Sigmoid colon (tissue), 7 donors: ENCODE measurements at regions of chr16 and their contacts with region 1.

Region 1: DNA sequence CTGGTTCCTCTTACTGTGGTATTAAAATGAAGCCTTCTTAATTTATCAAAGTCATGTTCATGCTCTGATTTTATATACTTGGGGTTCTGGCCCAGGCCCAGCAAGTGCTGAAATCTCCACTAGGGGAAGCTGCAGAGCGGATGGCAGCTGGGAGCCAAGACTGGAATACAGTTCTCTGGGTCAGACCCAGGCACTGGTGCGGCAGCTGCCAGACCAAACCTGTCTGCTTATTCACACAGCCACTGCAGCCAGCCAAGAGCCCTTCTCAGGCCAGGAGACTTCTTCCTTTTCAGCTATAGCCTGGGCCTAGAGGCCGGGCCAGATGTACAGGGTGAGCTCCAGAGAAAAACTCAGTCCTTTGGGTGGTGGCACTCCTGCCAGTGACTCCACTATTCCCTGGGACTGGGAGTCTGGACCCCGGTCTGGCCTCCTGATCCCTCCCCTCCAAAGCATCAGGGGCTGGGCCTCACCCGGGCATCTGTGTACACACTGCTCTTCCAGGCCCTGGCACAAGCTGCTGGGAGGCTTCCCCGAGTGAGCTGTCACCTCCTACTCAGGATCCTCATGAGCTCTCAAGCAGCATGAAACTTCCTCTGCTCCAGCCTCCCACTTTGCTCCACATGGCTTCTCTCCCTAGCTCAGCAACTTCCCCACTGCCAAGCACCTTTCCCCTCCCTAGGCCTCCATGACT is 24.4 kb downstream of the ATP6V0D1 start:
- DNase-seq: peak; percentile 95
- H3K4me3 ChIP-seq: no peak overlapping the region
- H3K27ac ChIP-seq: peak overlapping the region; percentile 60 to 82 (median 76)
- H3K4me1 ChIP-seq: peaks cover 0 to 63% (median 60%) of the 10 kb centered on the region in 4 donors
- H3K27me3 ChIP-seq: no peaks in the 10 kb centered on the region
- CTCF ChIP-seq: peak; percentile 41 to 79 (median 69)
- EP300 ChIP-seq: no peak
- POLR2A ChIP-seq: no peak

Region 2: GRCh38 chr16:67428146-67428731 is 28.3 kb before region 1 on chr16:
- intact Hi-C with region 1: loop called (anchors 2 kb)
- DNase-seq: peak; percentile 87
- H3K4me3 ChIP-seq: no peak overlapping the region
- H3K27ac ChIP-seq: no peak overlapping the region
- H3K4me1 ChIP-seq: peaks cover 0 to 27% (median 26%) of the 10 kb centered on the region in 4 donors
- H3K27me3 ChIP-seq: peaks cover 6 to 48% (median 11%) of the 10 kb centered on the region in 3 donors
- CTCF ChIP-seq: peak; percentile 76 to 88 (median 78)
- EP300 ChIP-seq: no peak
- POLR2A ChIP-seq: no peak